PC-3 (cell line): ENCODE measurements at regions of chr1 and their contacts with region 1.

Region 1: DNA sequence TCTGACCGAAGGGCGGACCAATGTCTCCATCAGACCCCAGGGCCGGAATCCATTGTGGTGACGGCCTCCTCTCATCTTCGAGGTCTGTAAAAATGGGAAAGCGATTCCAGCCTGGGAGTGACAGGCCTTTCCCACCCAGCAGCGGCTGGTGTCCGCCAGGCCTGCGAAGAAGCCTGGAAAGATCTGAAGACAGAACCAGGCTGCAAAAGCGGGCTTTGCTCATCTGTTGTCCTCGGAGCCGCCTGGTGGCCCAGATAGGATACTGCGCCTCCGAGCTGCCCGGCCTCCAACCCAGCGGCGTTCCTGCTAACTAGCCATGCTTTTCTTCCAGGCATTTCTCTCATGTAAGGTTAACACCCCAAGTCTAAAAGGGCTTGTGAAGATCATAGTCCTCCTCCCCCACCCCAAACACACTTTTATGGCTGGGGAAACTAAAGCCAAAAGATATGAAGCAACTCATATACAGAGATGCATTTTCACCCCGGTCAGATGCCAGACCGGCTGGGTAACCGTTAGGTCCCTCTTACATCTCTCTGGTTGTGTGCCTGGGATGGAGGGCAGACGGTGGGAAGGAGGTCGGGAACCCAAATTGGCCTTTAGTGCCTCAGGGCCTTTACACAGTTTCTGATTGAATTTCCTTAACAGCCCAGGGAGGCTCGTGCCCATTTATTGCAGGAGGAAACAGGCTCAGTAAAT is 1.9 kb upstream of the DHRS3 start:
- DNase-seq: peak; percentile 88
- ATAC-seq: peak; percentile 31
- H3K4me3 ChIP-seq: peak overlapping the region; percentile 83
- H3K27ac ChIP-seq: peak overlapping the region; percentile 91
- H3K4me1 ChIP-seq: peaks cover 20% of the 10 kb centered on the region
- H3K27me3 ChIP-seq: no peaks in the 10 kb centered on the region
- CTCF ChIP-seq: peak; percentile 92

Region 2: DNA sequence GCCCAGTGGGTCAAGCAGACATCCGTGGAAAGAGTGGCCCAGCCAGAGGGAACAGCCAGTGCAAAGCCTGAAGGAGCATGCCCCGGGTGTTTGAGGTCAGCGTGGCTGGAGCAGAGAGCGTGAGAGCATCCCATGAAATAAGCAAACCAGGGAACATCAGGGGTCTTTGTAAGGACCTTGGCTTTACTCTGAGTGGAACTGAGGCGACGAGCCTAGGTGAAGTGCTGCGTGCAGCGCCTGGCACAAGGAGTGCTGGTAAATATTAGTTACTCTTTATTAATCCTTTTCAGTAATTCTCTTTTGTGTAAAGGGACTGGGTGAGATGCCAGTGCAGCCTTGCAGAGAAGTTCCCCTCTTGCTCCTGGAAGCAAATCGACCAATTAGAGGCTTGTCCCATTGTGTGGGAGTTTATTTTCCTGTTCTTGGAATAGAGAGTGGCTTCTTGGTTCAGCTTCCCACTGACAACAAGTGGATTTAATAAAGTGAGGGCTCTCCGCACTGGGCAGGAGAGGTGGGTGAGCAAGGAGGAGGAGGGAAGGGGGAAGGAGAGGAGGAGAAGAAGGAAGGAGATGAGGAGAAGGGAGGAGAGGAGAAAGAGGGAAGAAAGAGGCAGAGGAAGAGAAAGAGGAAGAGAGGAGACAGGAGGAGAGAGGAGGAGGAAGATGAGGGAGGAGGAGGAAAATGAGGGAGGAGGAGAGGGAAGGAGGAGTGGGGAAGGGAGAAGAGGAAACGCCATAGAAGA is 1178.6 kb before region 1 on chr1:
- CTCF ChIA-PET with region 1: no interaction called
- POLR2A ChIA-PET with region 1: no interaction called
- intact Hi-C with region 1: no loop called
- DNase-seq: no peak
- ATAC-seq: no peak
- H3K4me3 ChIP-seq: no peak overlapping the region
- H3K27ac ChIP-seq: no peak overlapping the region
- H3K4me1 ChIP-seq: no peaks in the 10 kb centered on the region
- H3K27me3 ChIP-seq: peaks cover 95% of the 10 kb centered on the region
- CTCF ChIP-seq: no peak

Region 3: DNA sequence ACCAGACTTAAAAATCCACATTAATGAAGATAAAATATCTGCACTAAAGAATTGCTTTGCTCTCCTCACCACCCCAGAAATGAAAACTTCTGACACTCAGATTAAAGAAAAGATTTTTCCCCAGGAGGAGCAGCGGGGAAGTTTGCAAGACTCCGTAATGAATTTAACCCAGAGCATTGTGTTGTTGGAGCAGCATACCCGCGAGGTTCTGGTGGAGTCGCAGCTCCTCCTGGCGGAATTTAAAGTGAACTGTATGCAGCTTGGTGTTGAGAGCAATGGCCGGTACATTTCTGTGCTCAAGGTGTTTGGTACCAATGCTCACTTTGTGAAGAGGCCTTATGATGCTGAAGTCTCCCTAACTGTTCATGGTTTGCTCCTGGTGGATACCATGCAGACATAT is 343.7 kb before region 1 on chr1:
- CTCF ChIA-PET with region 1: interaction called, 11 read pairs
- POLR2A ChIA-PET with region 1: no interaction called
- intact Hi-C with region 1: no loop called
- DNase-seq: peak; percentile 53
- ATAC-seq: peak; percentile 52; the same call in 1 of the 2 replicates
- H3K4me3 ChIP-seq: no peak overlapping the region
- H3K27ac ChIP-seq: no peak overlapping the region
- H3K4me1 ChIP-seq: no peaks in the 10 kb centered on the region
- H3K27me3 ChIP-seq: no peaks in the 10 kb centered on the region
- CTCF ChIP-seq: peak; percentile 65

Region 4: GRCh38 chr1:12336413-12336812 is 283.5 kb before region 1 on chr1:
- CTCF ChIA-PET with region 1: interaction called, 19 read pairs
- POLR2A ChIA-PET with region 1: no interaction called
- intact Hi-C with region 1: loop called (anchors 5 kb)
- DNase-seq: no peak
- ATAC-seq: no peak
- H3K4me3 ChIP-seq: no peak overlapping the region
- H3K27ac ChIP-seq: no peak overlapping the region
- H3K4me1 ChIP-seq: no peaks in the 10 kb centered on the region
- H3K27me3 ChIP-seq: no peaks in the 10 kb centered on the region
- CTCF ChIP-seq: no peak

Region 5: GRCh38 chr1:12407050-12407961 is 212.6 kb before region 1 on chr1:
- CTCF ChIA-PET with region 1: interaction called, 10 read pairs
- POLR2A ChIA-PET with region 1: no interaction called
- intact Hi-C with region 1: loop called (anchors 1 kb)
- DNase-seq: peak; percentile 90
- ATAC-seq: peak; percentile 97
- H3K4me3 ChIP-seq: no peak overlapping the region
- H3K27ac ChIP-seq: peak overlapping the region; percentile 60
- H3K4me1 ChIP-seq: peaks cover 31% of the 10 kb centered on the region
- H3K27me3 ChIP-seq: no peaks in the 10 kb centered on the region
- CTCF ChIP-seq: peak; percentile 78

Region 6: DNA sequence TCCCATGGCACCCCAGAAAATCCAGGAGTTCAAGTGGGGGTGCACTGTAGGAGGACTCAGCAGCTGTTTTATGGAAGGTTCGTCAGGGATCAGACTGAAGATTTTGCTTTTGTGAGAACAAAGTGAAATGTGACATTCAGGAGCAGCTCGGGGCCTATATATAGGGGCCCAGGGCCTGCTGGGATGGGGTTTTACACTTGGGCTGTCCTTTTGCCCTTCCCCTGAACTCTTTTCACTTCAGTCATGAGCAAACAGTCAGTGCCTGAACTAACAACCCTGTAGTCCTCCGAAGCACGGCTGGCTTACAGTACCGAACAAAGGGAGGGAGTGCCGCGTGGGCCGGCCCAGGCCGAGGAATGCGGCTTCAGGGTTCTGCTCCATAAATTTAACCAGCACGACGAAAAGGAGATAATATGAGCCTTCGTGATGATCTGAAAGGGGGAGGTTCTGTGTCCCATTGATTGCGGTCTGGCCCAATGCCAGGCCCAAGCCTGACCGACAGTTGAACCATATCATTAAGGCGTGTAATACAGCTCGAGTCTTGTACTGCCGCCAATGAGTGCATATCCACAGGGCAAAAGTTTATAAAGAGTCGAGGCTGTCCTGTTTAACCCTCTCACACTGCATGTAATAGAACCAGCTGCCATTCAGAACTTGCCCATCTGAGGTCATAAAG is 141.9 kb before region 1 on chr1:
- CTCF ChIA-PET with region 1: no interaction called
- POLR2A ChIA-PET with region 1: interaction called, 20 read pairs
- intact Hi-C with region 1: loop called (anchors 1 kb)
- DNase-seq: peak; percentile 98
- ATAC-seq: peak; percentile 72
- H3K4me3 ChIP-seq: peak overlapping the region; percentile 37; the same call in 1 of the 2 replicates
- H3K27ac ChIP-seq: peak overlapping the region; percentile 96
- H3K4me1 ChIP-seq: peaks cover 74% of the 10 kb centered on the region
- H3K27me3 ChIP-seq: no peaks in the 10 kb centered on the region
- CTCF ChIP-seq: no peak

Region 7: GRCh38 chr1:12596007-12596821 is 23.7 kb before region 1 on chr1:
- CTCF ChIA-PET with region 1: interaction called, 6 read pairs
- POLR2A ChIA-PET with region 1: interaction called, 14 read pairs
- intact Hi-C with region 1: loop called (anchors 1 kb)
- DNase-seq: peak; percentile 92
- ATAC-seq: peak; percentile 72
- H3K4me3 ChIP-seq: peak overlapping the region; percentile 62
- H3K27ac ChIP-seq: peak overlapping the region; percentile 98
- H3K4me1 ChIP-seq: peaks cover 55% of the 10 kb centered on the region
- H3K27me3 ChIP-seq: no peaks in the 10 kb centered on the region
- CTCF ChIP-seq: no peak

Region 8: DNA sequence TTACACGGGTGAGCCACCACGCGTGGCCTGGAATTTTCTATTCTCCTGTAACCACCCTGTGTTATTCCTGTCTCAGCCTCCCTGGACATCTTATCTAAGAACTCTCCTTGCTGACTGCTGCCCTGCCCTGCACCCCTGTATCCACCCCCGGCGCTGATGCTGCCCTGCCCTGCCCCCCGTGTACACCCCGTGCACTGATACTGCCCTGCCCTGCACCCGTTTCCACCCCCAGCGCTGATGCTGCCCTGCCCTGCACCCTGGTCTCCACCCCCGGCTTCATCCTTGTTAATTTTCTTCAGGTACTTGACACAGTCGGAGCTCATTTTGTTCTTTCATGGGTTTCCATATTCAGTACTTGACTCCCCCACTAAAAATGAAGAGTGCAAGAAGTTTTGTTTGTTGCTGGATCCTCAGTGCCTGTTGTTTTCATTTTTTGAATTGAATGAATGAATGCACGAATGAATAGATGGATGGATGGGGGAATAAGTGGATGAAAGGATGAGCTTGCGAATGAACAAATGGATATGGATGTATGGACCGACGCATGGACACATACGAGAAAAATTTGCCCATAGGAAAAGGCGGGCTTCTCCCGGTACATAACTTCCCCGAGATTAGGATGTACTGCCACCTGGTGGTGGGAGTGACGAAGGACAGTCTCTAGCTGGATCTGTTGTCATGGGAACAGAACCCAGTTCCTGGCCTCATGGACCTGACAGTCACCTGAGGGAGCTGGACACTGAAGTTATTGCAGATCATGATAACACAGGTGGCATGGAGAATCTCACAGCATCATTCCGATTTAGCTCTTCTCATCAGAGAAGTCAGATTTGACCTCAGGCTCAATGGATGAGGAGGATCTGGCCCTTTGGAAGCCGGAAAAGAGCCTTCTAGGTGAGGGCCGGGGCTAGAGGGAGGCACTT is 38.9 kb after region 1 on chr1:
- CTCF ChIA-PET with region 1: no interaction called
- POLR2A ChIA-PET with region 1: interaction called, 3 read pairs
- intact Hi-C with region 1: loop called (anchors 5 kb)
- DNase-seq: peak; percentile 96
- ATAC-seq: peak; percentile 93
- H3K4me3 ChIP-seq: peak overlapping the region; percentile 37; the same call in 1 of the 2 replicates
- H3K27ac ChIP-seq: no peak overlapping the region
- H3K4me1 ChIP-seq: no peaks in the 10 kb centered on the region; the same call in 1 of the 2 replicates
- H3K27me3 ChIP-seq: peaks cover 6% of the 10 kb centered on the region; the same call in 1 of the 2 replicates
- CTCF ChIP-seq: peak; percentile 93